Gastrocnemius medialis (tissue), 4 donors: ENCODE measurements at regions of chr20 and their contacts with region 1.

Region 1: DNA sequence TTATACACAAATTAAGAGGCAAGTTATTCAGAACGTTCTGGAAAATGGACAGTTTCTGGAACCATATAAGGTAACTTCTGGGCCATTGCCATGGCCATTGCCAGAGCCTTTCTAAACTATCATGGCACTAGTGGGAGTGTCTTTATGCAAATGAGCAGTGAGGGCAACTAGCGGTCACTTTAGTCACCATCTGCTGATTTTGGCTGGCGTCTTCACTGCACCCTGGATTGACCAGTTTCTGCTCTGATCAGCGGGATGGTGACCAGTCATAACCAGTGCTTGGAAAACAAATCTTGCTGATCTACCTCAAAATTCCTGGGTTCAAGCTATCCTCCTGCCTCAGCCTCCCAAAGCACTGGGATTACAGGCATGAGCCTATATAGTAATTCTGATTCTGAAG is 7.3 kb upstream of the SNTA1 start:
- DNase-seq: peak in 1 of 2 donors; percentile 50
- ATAC-seq: peak; percentile 91 to 95
- H3K4me3 ChIP-seq: no peak overlapping the region
- H3K27ac ChIP-seq: no peak overlapping the region
- H3K4me1 ChIP-seq: peaks cover 0 to 6% of the 10 kb centered on the region in 2 donors
- H3K27me3 ChIP-seq: no peaks in the 10 kb centered on the region
- CTCF ChIP-seq: no peak
- POLR2A ChIP-seq: no peak

Region 2: GRCh38 chr20:33401184-33401920 is 49.5 kb before region 1 on chr20 and contains the start of gene CDK5RAP1:
- in situ Hi-C with region 1: loop called in 1 of 4 experiments (anchors 10 kb)
- intact Hi-C with region 1: no loop called
- DNase-seq: peak; percentile 76 to 85
- ATAC-seq: peak; percentile 97
- H3K4me3 ChIP-seq: peak within 1 kb of the TSS; percentile 86 to 95 (median 90)
- H3K27ac ChIP-seq: peak within 1 kb of the TSS; percentile 74 to 87 (median 82)
- H3K4me1 ChIP-seq: peaks cover 27 to 34% of the 10 kb centered on the region in 2 donors
- H3K27me3 ChIP-seq: no peaks in the 10 kb centered on the region
- CTCF ChIP-seq: peak in 1 of 5 experiments; percentile 17
- POLR2A ChIP-seq: peak in 1 of 2 donors; percentile 47
- total RNA-seq, gene CDK5RAP1: 23.2 to 27.6 (median 25.8) TPM

Region 3: DNA sequence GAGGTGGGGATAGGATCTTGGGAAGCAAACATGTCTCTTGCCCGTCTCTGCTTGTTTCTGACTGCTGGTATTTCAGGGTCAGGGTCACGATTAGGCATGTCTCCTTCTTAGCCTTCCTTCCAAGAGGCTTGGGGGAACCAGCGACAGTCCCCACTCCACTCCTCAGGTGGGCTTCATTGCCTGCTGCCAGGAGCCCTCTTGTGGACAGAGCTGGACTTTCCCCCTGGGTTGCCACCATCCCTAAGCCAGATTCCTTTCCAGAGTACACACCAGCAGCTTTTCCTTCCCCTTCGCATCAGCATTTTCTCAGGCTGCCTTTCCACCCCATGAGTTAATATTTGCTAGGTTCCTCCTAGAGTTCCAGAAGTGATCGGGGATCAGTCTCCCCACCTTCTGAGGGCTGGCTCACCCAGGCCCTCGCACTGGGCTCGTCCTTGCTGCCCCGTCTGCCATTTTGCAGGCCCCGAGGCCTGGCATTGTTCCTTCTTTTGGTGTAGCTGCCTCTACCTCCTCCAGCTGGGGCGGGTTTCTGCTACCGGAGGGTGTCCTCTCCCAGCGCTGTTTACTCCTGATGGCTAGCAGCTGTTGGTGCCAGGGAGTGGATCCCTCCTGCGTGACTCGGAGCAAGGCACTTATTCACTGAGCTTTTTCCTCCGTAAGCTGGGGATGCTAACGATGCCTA is 202.5 kb after region 1 on chr20:
- in situ Hi-C with region 1: loop called in 2 of 4 experiments (anchors 5 to 10 kb)
- intact Hi-C with region 1: no loop called
- DNase-seq: no peak
- ATAC-seq: peak; percentile 33 to 48
- H3K4me3 ChIP-seq: no peak overlapping the region
- H3K27ac ChIP-seq: no peak overlapping the region
- H3K4me1 ChIP-seq: peaks cover 21% of the 10 kb centered on the region in 2 donors
- H3K27me3 ChIP-seq: no peaks in the 10 kb centered on the region
- CTCF ChIP-seq: peak; percentile 57 to 73 (median 67)
- POLR2A ChIP-seq: no peak